HepG2 (cell line): ENCODE measurements at regions of chr3 and their contacts with region 1.

Region 1: GRCh38 chr3:109023656-109024254 is 70.1 kb upstream of the GUCA1C start:
- DNase-seq: peak; percentile 25
- ATAC-seq: peak; percentile 61; the same call in 2 of the 3 replicates
- H3K4me3 ChIP-seq: no peak overlapping the region
- H3K27ac ChIP-seq: no peak overlapping the region
- H3K4me1 ChIP-seq: no peaks in the 10 kb centered on the region
- H3K27me3 ChIP-seq: no peaks in the 10 kb centered on the region
- CTCF ChIP-seq: peak; percentile 67
- EP300 ChIP-seq: no peak
- POLR2A ChIP-seq: no peak
- RAD21 ChIP-seq: no peak

Region 2: GRCh38 chr3:108946292-108947290 is 77.2 kb before region 1 on chr3:
- CTCF ChIA-PET with region 1: no interaction called
- POLR2A ChIA-PET with region 1: no interaction called
- in situ Hi-C with region 1: no loop called
- intact Hi-C with region 1: no loop called
- DNase-seq: no peak
- ATAC-seq: no peak
- H3K4me3 ChIP-seq: no peak overlapping the region
- H3K27ac ChIP-seq: no peak overlapping the region
- H3K4me1 ChIP-seq: no peaks in the 10 kb centered on the region
- H3K27me3 ChIP-seq: no peaks in the 10 kb centered on the region
- CTCF ChIP-seq: no peak
- EP300 ChIP-seq: no peak
- POLR2A ChIP-seq: no peak
- RAD21 ChIP-seq: no peak

Region 3: GRCh38 chr3:109081746-109082510 is 58.2 kb after region 1 on chr3:
- CTCF ChIA-PET with region 1: interaction called, 15 read pairs
- POLR2A ChIA-PET with region 1: no interaction called
- in situ Hi-C with region 1: no loop called
- intact Hi-C with region 1: loop called (anchors 1 kb)
- DNase-seq: peak; percentile 31
- ATAC-seq: peak; percentile 91
- H3K4me3 ChIP-seq: no peak overlapping the region
- H3K27ac ChIP-seq: no peak overlapping the region
- H3K4me1 ChIP-seq: no peaks in the 10 kb centered on the region
- H3K27me3 ChIP-seq: no peaks in the 10 kb centered on the region
- CTCF ChIP-seq: peak; percentile 71
- EP300 ChIP-seq: no peak
- POLR2A ChIP-seq: no peak
- RAD21 ChIP-seq: no peak

Region 4: DNA sequence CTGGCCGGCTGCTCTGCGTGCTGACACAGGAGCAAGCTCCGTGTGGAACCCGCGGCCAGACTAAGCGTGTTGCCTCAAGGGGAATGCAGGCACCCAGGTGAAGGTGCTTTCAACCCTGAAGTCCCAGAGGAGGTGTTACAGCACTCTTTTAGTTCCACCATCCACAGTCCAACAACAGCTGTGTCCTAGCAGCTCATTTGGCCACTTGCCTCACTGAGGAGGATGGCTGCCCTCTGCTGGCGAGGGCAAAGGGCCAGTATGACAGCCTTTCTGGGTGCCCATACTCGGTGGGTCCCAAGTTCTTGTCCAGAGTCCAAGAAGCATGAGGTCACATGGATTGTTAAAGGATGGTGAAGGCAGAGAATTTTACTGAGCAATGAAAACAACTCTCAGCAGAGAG is 200.6 kb after region 1 on chr3:
- CTCF ChIA-PET with region 1: no interaction called
- POLR2A ChIA-PET with region 1: no interaction called
- in situ Hi-C with region 1: no loop called
- intact Hi-C with region 1: loop called (anchors 1 kb)
- DNase-seq: peak; percentile 12
- ATAC-seq: peak; percentile 92
- H3K4me3 ChIP-seq: no peak overlapping the region
- H3K27ac ChIP-seq: no peak overlapping the region
- H3K4me1 ChIP-seq: no peaks in the 10 kb centered on the region
- H3K27me3 ChIP-seq: no peaks in the 10 kb centered on the region
- CTCF ChIP-seq: peak; percentile 72
- EP300 ChIP-seq: no peak
- POLR2A ChIP-seq: no peak
- RAD21 ChIP-seq: no peak